Activated naive CD4-positive, alpha-beta T cell treated with anti-CD3 and anti-CD28 coated beads, Interleukin-2, amount 10 ng/mL, durations not matched to agents 7 days and 5 days (primary cell): ENCODE measurements at regions of chr9 and their contacts with region 1.

Region 1: GRCh38 chr9:36728651-36729520 is 156.2 kb downstream of the MELK start:
- DNase-seq: peak; percentile 81
- H3K4me3 Mint-ChIP-seq: no peak overlapping the region
- H3K27ac Mint-ChIP-seq: no peak overlapping the region
- H3K4me1 Mint-ChIP-seq: no peaks in the 10 kb centered on the region
- H3K27me3 Mint-ChIP-seq: peaks cover 10% of the 10 kb centered on the region

Region 2: DNA sequence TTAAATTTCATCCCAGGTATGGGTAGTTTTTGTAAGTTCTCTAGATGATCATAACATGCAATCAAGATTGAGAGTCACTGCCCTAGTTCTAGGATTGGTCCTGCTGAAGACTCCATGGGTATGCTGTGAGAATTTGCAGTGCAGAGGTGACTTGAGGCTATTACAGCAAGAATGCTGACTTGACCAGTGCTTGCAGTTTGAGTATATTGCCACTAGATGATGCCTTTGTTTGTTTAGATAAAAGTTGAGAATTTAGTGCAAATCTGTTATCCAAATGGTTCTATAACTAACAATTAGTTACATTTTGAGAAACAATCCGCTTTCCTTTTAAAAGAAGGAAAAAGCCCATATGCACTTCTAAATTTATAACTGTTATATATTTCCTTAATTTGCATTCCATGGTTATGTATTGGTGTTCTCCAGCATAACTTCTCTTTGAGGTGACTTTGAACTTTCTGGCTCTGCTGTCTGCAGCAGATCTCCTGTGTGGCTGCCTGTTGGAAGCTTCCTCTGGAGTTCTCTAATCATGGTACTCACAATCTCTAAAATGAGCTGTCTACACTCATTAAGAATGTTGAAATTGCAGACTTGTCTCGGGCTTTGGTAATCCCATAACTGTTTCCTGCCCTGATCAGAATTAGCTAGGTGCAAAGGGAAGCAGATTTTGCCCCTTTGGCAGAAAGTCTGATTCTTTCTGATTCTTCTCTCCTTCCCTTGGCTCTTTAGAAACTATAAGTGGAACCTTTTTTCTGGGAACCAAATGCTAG is 131.3 kb before region 1 on chr9:
- CTCF ChIA-PET with region 1: interaction called, 21 read pairs
- DNase-seq: no peak
- H3K4me3 Mint-ChIP-seq: no peak overlapping the region
- H3K27ac Mint-ChIP-seq: peak overlapping the region; percentile 45
- H3K4me1 Mint-ChIP-seq: no peaks in the 10 kb centered on the region
- H3K27me3 Mint-ChIP-seq: no peaks in the 10 kb centered on the region

Region 3: DNA sequence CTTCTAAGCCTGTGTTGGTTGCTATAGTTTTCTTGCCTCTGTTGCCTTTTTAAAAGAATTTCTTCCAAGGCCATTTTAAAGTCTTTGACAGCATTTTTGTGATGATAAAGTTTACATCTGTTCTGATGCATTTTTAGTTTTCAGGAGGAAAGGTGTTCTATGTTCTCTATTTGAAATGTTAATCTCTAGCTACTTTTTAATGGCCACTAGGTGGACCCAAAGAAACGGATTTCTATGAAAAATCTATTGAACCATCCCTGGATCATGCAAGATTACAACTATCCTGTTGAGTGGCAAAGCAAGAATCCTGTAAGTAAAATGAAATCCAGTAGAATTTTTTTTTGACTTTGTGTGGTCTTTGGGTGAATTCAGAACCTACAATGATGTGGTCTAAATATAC is 96.0 kb before region 1 on chr9:
- CTCF ChIA-PET with region 1: interaction called, 32 read pairs
- DNase-seq: no peak
- H3K4me3 Mint-ChIP-seq: no peak overlapping the region
- H3K27ac Mint-ChIP-seq: no peak overlapping the region
- H3K4me1 Mint-ChIP-seq: no peaks in the 10 kb centered on the region
- H3K27me3 Mint-ChIP-seq: no peaks in the 10 kb centered on the region

Region 4: DNA sequence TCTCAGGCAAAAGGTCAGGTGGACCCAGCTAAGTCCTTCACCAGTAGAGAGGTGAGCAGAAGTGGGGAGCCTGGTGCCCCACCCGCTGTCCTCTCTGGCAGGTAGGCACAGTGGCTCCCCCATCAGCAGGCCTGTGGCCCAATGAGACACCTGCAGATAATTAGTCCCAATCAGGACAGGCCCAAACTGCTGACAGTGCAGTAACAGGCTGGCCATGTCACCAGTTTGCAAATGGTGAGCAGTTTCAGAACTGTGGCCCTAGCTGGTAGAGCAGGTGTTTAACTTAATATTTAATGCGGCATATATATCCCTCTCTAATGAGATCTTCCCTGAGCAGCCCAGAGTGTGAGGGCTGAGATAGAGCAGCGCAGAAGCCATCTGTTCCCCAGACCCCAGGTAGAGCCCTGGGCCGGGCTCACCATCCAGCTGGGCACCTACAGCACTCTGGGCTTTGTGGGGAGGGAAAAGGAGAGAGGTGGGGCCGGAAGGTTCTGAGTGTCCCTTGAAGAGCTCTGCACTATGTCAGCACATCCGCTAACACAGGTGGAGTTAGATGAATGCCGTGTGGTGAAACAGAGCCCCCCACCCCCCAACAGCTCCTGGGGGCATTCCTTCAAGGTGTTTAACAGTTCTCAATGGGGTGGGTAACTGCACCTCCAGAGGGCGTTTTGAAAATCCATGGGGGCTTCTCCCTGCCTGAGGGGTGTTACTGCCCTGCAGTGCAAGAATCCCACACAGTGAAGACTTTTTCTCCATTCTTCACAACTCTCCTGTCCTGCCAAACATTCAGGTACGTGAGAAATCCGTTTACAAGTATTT is 184.7 kb after region 1 on chr9:
- CTCF ChIA-PET with region 1: no interaction called
- DNase-seq: no peak
- H3K4me3 Mint-ChIP-seq: no peak overlapping the region
- H3K27ac Mint-ChIP-seq: no peak overlapping the region
- H3K4me1 Mint-ChIP-seq: no peaks in the 10 kb centered on the region
- H3K27me3 Mint-ChIP-seq: peaks cover 43% of the 10 kb centered on the region